ENCODE measurements at regions of chr1 and their contacts with region 1.

Region 1: GRCh38 chr1:44609412-44609767 is 64.9 kb downstream of the TMEM53 start:
- DNase-seq: no peak
- H3K4me3 ChIP-seq: no peak overlapping the region
- H3K27me3 ChIP-seq: peaks cover 3% of the 10 kb centered on the region; the same call in 1 of the 2 replicates
- CTCF ChIP-seq: peak; percentile 81

Region 2: DNA sequence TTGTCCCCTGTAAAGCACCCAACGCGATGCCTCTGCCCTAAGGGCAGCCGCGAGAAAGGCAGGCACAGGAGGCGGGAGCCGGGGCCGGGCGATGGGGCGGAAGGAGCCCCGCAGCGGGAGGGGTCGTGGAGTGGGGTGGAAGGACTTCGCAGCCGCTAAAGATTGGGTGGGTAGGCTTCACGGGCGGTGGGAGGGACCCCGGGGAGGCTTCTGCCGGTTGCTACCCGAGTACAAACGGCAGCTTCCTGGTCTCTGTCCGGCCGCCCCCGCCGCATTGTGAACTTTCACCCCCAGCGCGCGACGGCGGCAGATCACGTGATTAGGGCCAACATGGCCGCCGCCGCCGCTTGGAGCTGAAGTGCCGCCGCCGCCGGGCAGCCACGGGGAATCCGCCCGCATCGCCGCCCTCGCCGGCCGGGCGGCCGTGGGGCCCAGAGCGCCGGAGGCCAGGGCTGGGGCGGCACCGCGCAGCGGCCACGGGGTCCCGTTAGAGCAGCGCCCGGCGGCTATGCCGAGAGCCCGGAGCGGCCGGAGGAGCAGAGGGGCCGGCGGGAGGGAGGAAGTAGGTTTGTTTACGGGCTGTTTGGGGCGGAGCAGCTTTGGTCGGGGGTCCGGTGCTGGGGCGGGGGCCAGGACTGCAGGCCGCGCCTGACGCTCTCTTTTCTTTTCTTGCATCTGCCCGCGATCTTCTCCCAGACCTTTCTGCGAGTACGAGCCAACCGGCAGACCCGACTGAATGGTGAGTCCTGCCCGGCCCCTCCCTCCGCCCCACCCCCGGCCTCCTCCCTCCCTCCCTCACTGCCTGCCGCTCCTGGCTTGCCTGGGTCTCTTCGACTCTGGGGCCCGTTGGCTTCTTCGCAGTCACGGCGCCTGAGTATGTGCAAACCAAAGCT is 22.5 kb after region 1 on chr1:
- CTCF ChIA-PET with region 1: interaction called, 91 read pairs
- POLR2A ChIA-PET with region 1: no interaction called
- DNase-seq: no peak
- H3K4me3 ChIP-seq: peak overlapping the region; percentile 67
- H3K27me3 ChIP-seq: no peaks in the 10 kb centered on the region
- CTCF ChIP-seq: no peak

Region 3: DNA sequence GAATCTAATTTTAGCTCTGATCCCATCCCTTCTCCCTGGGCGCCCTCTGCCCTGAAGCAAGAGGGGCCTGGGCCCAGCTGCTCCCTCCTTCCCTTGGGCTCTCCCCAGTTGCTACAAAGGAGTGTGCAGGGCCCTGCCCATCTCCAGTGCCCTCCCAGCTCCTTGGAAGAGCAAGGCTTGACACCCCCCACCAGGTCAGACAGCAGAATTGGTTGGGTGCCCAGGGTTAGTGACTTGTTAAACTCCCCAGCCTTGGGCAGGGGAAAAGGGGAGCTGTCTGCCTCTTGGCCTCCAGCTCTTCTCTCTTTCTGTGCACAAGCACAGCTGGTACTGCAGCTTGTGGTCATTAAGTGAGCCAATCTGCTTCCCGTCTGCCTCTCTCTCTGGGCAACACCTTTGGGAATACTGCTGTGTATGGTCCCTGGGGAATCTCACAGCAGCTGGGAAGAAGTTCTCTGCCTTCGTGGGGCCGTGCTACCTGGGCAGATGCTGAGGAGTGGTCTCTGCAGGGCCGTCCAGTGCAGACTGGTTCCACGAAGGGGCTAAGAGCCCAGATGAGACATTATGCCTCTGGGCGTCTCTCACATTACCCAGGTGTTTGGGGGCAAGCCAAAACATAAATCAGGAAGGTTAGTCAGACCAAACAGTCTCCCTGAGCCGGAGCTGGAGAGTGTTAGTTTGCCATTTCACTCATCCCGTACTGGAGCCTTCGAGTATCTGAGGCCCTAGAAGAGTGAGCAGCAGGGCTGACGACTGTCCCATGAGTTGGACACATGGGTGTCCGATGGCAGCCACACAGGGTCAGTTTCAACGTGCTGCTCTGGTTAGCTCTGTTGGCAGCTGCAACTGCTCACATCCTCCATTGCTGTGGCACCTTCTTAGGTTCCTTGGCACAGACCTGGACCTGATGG is 27.6 kb after region 1 on chr1:
- CTCF ChIA-PET with region 1: interaction called, 91 read pairs
- POLR2A ChIA-PET with region 1: no interaction called
- DNase-seq: no peak
- H3K4me3 ChIP-seq: no peak overlapping the region
- H3K27me3 ChIP-seq: no peaks in the 10 kb centered on the region
- CTCF ChIP-seq: no peak

Region 4: GRCh38 chr1:44660176-44660575 is 50.8 kb after region 1 on chr1:
- CTCF ChIA-PET with region 1: interaction called, 38 read pairs
- POLR2A ChIA-PET with region 1: no interaction called
- DNase-seq: no peak
- H3K4me3 ChIP-seq: no peak overlapping the region
- H3K27me3 ChIP-seq: no peaks in the 10 kb centered on the region
- CTCF ChIP-seq: no peak

Region 5: GRCh38 chr1:44674113-44675000 is 65.0 kb after region 1 on chr1 and contains the starts of genes ARMH1 and TMEM53:
- CTCF ChIA-PET with region 1: interaction called, 17 read pairs
- POLR2A ChIA-PET with region 1: no interaction called
- DNase-seq: peak; percentile 91
- H3K4me3 ChIP-seq: peak within 1 kb of the TSS; percentile 65
- H3K27me3 ChIP-seq: no peaks in the 10 kb centered on the region
- CTCF ChIP-seq: no peak
- polyA plus RNA-seq, gene ARMH1: 0.71 and 0.86 TPM in 2 replicates
- polyA plus RNA-seq, gene TMEM53: 7.9 and 12.1 TPM in 2 replicates

Measured in BJ (cell line).